ENCODE measurements at regions of chr4 and their contacts with region 1.

Region 1: GRCh38 chr4:69749771-69750170 is 10.6 kb downstream of the SULT1B1 start:
- H3K4me3 Mint-ChIP-seq: no peak overlapping the region
- H3K27ac Mint-ChIP-seq: no peak overlapping the region
- H3K4me1 Mint-ChIP-seq: peaks cover 38% of the 10 kb centered on the region
- H3K27me3 Mint-ChIP-seq: no peaks in the 10 kb centered on the region

Region 2: DNA sequence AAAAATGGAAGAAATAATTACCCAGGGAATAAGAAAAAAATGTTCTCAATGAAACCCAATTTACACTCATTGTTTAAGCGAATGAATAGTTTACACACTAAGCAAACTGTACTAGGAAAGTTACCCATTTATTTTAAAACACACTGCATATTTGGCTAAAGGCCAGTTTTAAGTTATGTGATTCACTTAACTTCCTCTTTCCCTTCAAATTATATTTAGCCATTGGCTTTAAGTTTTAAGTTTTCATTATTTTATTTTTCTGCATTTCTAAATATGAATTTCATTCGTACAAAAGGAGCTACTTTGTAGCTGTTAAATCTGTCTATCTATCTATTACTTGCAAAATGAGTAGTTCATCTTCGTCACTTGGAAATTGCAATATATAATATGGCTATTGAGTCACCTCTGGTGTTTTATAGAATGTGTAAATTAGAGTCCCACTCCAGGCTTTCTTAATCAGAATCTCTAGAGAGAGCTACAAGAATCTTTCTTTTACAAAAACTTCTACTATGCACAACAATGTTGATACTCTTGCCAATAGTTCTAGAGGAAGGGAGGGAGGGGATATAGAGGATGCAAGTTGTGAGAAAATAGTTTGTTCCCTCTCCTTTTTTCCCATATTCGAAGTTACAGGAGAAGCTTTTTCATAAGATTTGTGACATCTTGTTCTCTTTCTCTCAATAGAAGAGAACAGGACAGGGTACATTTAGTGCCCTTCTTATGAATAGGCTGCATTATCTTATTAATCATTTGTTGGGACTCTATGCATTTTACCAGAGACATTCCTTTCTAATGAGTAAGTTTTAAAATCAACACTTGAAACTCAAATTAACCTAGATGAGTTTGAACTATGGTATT is 31.1 kb before region 1 on chr4:
- intact Hi-C with region 1: loop called (anchors 5 kb)
- H3K4me3 Mint-ChIP-seq: no peak overlapping the region
- H3K27ac Mint-ChIP-seq: no peak overlapping the region
- H3K4me1 Mint-ChIP-seq: peaks cover 5% of the 10 kb centered on the region
- H3K27me3 Mint-ChIP-seq: no peaks in the 10 kb centered on the region

Region 3: GRCh38 chr4:69800599-69800998 is 50.8 kb after region 1 on chr4:
- intact Hi-C with region 1: no loop called
- H3K4me3 Mint-ChIP-seq: no peak overlapping the region
- H3K27ac Mint-ChIP-seq: no peak overlapping the region
- H3K4me1 Mint-ChIP-seq: no peaks in the 10 kb centered on the region
- H3K27me3 Mint-ChIP-seq: no peaks in the 10 kb centered on the region

Region 4: DNA sequence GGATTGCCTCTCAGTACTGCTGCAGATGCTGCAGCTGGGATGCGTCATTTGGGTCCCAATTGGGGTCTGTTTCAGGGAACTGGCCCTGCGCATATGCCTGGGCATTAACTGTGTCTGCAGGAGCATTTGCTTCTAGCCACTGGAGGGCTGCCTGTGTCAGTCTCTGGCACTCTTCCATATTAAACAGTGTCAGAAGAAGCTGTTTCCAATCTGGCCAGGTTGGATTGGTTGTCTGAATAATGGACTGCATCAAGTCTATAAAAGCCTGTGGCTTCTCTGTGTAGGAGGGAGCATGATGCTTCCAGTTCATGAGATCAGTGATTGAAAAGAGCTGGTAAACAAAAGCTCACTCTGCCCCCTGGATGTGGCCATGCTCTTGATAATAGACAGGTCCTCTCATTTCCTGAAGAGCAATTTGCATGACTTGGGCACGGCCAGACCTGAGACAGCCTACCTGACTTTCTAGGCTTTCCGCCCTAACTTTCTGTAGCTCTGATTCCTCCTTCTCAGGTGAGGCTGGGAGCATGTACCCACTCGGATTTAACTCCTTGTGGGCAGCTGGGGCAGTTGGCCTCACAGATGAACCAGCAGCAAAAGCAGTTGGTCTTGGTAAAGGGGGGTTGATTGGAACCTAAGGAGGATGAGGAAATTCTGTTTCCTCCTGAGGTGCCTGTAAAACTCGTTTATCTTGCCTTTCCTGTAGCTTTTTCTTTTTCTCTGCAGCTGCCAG is 81.0 kb after region 1 on chr4:
- intact Hi-C with region 1: loop called (anchors 5 kb)
- H3K4me3 Mint-ChIP-seq: no peak overlapping the region
- H3K27ac Mint-ChIP-seq: peak overlapping the region; percentile 95
- H3K4me1 Mint-ChIP-seq: peaks cover 38% of the 10 kb centered on the region
- H3K27me3 Mint-ChIP-seq: no peaks in the 10 kb centered on the region